ENCODE measurements at regions of chr4 and their contacts with region 1.

Region 1: GRCh38 chr4:88613417-88613875 is 21.2 kb downstream of the HERC3 start:
- DNase-seq: peak in 7 of 9 donors; percentile 71 to 91 (median 85)
- ATAC-seq: peak; percentile 94
- H3K4me3 ChIP-seq: peak overlapping the region; percentile 43
- H3K4me3 Mint-ChIP-seq: peak overlapping the region; percentile 64 to 92 (median 84)
- H3K27ac ChIP-seq: peak overlapping the region; percentile 77
- H3K27ac Mint-ChIP-seq: peak overlapping the region; percentile 91 to 99 (median 99)
- H3K4me1 ChIP-seq: peaks cover 28 to 55% of the 10 kb centered on the region in 2 donors
- H3K4me1 Mint-ChIP-seq: peaks cover 50 to 98% (median 86%) of the 10 kb centered on the region in 7 donors
- H3K27me3 ChIP-seq: no peaks in the 10 kb centered on the region
- H3K27me3 Mint-ChIP-seq: no peaks in the 10 kb centered on the region

Region 2: GRCh38 chr4:88533937-88534750 is 79.3 kb before region 1 on chr4:
- CTCF ChIA-PET with region 1: interaction called, 10 read pairs
- POLR2A ChIA-PET with region 1: no interaction called
- intact Hi-C with region 1: loop called in 1 of 2 experiments (anchors 1 kb)
- DNase-seq: no peak
- ATAC-seq: no peak
- H3K4me3 ChIP-seq: no peak overlapping the region
- H3K4me3 Mint-ChIP-seq: no peak overlapping the region
- H3K27ac ChIP-seq: no peak overlapping the region
- H3K27ac Mint-ChIP-seq: no peak overlapping the region
- H3K4me1 ChIP-seq: no peaks in the 10 kb centered on the region
- H3K4me1 Mint-ChIP-seq: no peaks in the 10 kb centered on the region
- H3K27me3 ChIP-seq: no peaks in the 10 kb centered on the region
- H3K27me3 Mint-ChIP-seq: no peaks in the 10 kb centered on the region

Region 3: DNA sequence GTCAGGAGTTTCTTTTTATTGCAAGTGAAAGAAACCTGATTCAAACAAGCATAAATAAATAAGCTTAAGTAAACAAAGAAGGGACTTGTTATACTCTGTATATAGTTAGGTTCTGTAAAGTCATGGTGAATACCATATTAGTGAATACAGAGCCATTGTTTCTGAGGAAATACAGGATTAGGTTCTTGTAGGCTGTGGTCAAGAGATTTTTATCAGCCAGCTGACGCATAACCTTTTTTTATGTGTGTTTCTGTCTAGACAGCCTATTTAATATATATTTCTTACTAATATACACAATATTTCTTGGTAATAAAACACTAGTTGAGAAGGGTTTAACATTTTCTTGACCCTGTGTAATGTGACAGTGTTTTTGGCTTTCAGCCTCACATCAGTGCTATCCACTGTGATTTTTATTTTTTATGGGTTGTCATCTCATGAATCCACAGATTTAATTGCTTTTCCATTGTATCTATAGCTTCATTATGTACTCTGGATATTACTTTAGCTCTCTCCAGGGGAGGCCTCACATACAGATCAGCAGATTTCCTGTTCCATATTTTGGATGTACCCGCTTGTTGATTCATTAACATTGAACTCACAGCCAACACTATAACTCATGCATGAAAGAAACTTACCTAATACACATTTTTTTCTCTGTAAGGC is 13.1 kb before region 1 on chr4:
- CTCF ChIA-PET with region 1: interaction called, 4 read pairs
- POLR2A ChIA-PET with region 1: interaction called, 167 read pairs
- intact Hi-C with region 1: loop called in 1 of 2 experiments (anchors 1 kb)
- DNase-seq: no peak
- ATAC-seq: no peak
- H3K4me3 ChIP-seq: no peak overlapping the region
- H3K4me3 Mint-ChIP-seq: peak overlapping the region in 6 of 10 donors; percentile 12 to 79 (median 65)
- H3K27ac ChIP-seq: peak overlapping the region; percentile 20
- H3K27ac Mint-ChIP-seq: peak overlapping the region in 7 of 9 donors; percentile 44 to 85 (median 60)
- H3K4me1 ChIP-seq: peaks cover 30 to 51% of the 10 kb centered on the region in 2 donors
- H3K4me1 Mint-ChIP-seq: peaks cover 51 to 89% (median 84%) of the 10 kb centered on the region in 7 donors
- H3K27me3 ChIP-seq: no peaks in the 10 kb centered on the region
- H3K27me3 Mint-ChIP-seq: no peaks in the 10 kb centered on the region

Region 4: GRCh38 chr4:88628759-88629158 is 15.3 kb after region 1 on chr4:
- CTCF ChIA-PET with region 1: no interaction called
- POLR2A ChIA-PET with region 1: interaction called, 3 read pairs
- intact Hi-C with region 1: loop called in 1 of 2 experiments (anchors 2 kb)
- DNase-seq: no peak
- ATAC-seq: no peak
- H3K4me3 ChIP-seq: no peak overlapping the region
- H3K4me3 Mint-ChIP-seq: peak overlapping the region in 1 of 10 donors; percentile 32
- H3K27ac ChIP-seq: no peak overlapping the region
- H3K27ac Mint-ChIP-seq: no peak overlapping the region
- H3K4me1 ChIP-seq: no peaks in the 10 kb centered on the region
- H3K4me1 Mint-ChIP-seq: peaks cover 3 to 81% (median 56%) of the 10 kb centered on the region in 7 donors
- H3K27me3 ChIP-seq: no peaks in the 10 kb centered on the region
- H3K27me3 Mint-ChIP-seq: no peaks in the 10 kb centered on the region

Region 5: GRCh38 chr4:88659055-88659889 is 45.8 kb after region 1 on chr4:
- CTCF ChIA-PET with region 1: interaction called, 8 read pairs
- POLR2A ChIA-PET with region 1: no interaction called
- intact Hi-C with region 1: loop called (anchors 1 to 5 kb)
- DNase-seq: peak in 7 of 9 donors; percentile 23 to 53 (median 44)
- ATAC-seq: peak; percentile 75
- H3K4me3 ChIP-seq: no peak overlapping the region
- H3K4me3 Mint-ChIP-seq: no peak overlapping the region
- H3K27ac ChIP-seq: no peak overlapping the region
- H3K27ac Mint-ChIP-seq: peak overlapping the region in 6 of 9 donors; percentile 5 to 86 (median 41)
- H3K4me1 ChIP-seq: no peaks in the 10 kb centered on the region
- H3K4me1 Mint-ChIP-seq: peaks cover 8 to 39% (median 24%) of the 10 kb centered on the region in 7 donors
- H3K27me3 ChIP-seq: no peaks in the 10 kb centered on the region
- H3K27me3 Mint-ChIP-seq: no peaks in the 10 kb centered on the region